Activated CD4-positive, alpha-beta T cell treated with anti-CD3 and anti-CD28 coated beads for 36 hours (primary cell): ENCODE measurements at regions of chr1 and their contacts with region 1.

Region 1: DNA sequence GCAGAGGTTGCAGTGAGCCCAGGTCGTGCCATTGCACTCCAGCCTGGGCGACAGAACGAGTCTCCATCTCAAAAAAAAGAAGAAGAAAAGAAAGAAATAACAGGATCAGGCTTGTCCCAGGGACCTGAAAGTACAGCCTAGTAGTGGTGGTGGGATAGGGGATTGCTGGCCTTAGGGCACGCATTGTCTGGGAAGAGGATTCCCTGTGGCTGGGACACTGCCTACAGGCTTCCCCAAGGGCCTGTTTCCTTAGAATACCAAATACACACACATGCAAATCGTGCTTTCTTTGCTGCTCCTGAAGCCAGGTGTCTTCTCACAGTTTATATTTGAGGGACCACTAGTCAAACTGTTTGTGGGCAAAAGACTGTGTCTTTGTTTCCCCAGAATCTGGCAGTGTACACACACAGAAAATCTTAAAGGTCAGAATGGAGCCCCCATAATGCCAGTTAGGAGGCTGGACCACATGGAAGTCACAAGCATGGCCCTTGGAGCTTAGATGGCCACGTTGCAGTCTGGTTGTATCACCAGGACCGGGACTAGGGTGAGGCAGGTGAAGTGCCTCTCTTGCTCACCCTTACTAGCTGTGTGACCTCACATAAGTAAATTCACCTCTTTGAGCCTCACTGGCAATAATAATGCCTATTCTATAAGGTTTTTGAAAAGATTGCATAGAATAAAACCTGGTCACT is 12.7 kb upstream of the ASAP3 start:
- DNase-seq: no peak
- ATAC-seq: peak; percentile 12
- H3K4me3 Mint-ChIP-seq: no peak overlapping the region
- H3K27ac Mint-ChIP-seq: no peak overlapping the region
- H3K4me1 Mint-ChIP-seq: no peaks in the 10 kb centered on the region
- H3K27me3 Mint-ChIP-seq: no peaks in the 10 kb centered on the region

Region 2: GRCh38 chr1:23484253-23485001 is 12.2 kb before region 1 on chr1:
- CTCF ChIA-PET with region 1: interaction called, 48 read pairs
- POLR2A ChIA-PET with region 1: interaction called, 3 read pairs
- intact Hi-C with region 1: no loop called
- DNase-seq: peak; percentile 95
- ATAC-seq: peak; percentile 94
- H3K4me3 Mint-ChIP-seq: peak overlapping the region; percentile 79
- H3K27ac Mint-ChIP-seq: peak overlapping the region; percentile 33
- H3K4me1 Mint-ChIP-seq: peaks cover 20% of the 10 kb centered on the region
- H3K27me3 Mint-ChIP-seq: peaks cover 18% of the 10 kb centered on the region

Region 3: GRCh38 chr1:23514111-23514679 is 17.6 kb after region 1 on chr1:
- CTCF ChIA-PET with region 1: interaction called, 32 read pairs
- POLR2A ChIA-PET with region 1: interaction called, 4 read pairs
- intact Hi-C with region 1: no loop called
- DNase-seq: no peak
- ATAC-seq: no peak
- H3K4me3 Mint-ChIP-seq: no peak overlapping the region
- H3K27ac Mint-ChIP-seq: no peak overlapping the region
- H3K4me1 Mint-ChIP-seq: no peaks in the 10 kb centered on the region
- H3K27me3 Mint-ChIP-seq: no peaks in the 10 kb centered on the region

Region 4: DNA sequence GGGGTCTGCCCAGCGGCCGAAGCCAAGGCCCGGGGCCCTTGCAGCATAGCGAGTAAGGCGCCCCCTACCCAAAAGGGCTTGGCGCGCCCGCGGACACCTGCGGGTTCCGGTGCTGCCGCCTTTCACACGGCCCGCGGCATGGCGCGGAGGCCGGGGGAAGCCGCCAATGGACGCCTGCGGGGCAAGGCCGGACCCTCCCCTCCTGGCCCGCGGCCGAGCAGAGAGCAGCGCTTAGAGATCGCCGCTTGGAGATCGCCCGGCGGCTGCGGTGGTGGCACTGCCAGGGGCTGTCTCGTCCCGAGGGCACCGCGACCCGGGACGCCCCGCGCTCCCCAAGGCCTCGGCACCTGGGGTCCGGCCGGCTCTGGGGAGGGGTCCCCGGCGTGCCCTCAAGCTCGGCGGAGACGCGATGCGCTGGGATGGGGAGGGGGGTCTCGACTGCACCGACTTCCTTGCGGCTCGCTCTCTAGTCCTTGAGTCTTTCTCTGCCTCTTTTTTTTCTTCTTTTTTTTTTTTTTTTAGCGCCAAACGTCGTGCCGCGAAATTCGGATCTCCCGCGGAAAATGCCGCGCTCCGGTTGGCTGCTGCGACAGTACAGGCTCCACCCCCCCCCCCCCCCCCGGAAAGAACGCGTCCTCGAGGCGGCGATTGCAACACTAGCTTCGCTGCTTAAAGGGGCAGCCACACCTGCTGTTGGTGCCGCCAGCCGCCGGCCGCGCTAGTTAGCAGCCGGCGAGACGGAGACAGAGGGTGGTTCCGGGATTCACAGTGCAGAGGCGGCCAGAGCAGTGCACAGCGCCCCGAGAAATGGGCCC is 34.3 kb after region 1 on chr1 and contains the start of gene E2F2:
- CTCF ChIA-PET with region 1: interaction called, 67 read pairs
- POLR2A ChIA-PET with region 1: interaction called, 4 read pairs
- intact Hi-C with region 1: no loop called
- DNase-seq: peak; percentile 91
- ATAC-seq: peak; percentile 81
- H3K4me3 Mint-ChIP-seq: peak within 1 kb of the TSS; percentile 84
- H3K27ac Mint-ChIP-seq: peak within 1 kb of the TSS; percentile 95
- H3K4me1 Mint-ChIP-seq: peaks cover 68% of the 10 kb centered on the region
- H3K27me3 Mint-ChIP-seq: no peaks in the 10 kb centered on the region
- total RNA-seq, gene E2F2: 25.0 to 32.0 TPM

Region 5: DNA sequence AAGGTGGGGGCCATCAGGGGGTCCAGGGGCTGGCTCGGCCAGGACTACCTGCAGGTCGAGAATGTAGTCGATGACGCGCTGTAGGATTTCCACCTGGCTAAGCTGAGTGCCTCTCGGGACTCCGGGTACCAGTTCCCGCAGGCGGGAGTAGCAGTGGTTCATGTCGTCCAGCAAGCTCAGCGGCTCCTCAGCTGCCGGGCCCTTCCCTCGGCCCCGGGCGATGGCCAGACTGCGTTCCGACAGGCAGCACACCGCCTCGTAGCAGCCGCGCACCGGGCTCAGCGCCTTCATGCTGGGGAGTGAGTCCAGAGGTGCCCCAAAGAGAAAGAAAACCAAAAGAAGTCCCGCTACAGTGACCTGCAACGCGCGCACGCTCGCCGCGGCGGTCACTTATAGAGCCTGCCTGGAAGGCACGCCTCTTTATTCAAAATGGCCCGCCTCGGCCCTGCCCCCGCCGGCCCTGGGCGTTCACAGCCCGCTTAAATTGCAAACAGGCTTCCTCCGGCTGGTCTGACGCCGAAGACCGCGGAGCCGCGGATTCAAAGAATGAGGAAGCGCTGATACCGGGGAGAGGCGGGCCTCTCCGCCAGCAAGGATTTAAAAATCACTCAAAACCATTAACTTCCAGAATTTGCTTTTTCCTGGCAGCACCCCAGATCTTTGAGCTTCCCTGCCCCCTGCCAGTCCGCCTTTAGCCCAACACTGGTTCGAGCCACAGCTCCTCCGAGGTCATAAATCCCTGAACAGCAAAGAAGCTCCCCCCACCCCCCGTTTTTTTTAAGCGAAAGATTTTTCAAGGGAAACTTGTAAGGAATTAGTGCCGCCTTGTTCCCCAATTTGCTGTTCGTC is 62.7 kb after region 1 on chr1 and contains the start of gene ID3:
- CTCF ChIA-PET with region 1: interaction called, 11 read pairs
- POLR2A ChIA-PET with region 1: no interaction called
- intact Hi-C with region 1: no loop called
- DNase-seq: peak; percentile 96
- ATAC-seq: peak; percentile 71
- H3K4me3 Mint-ChIP-seq: peak within 1 kb of the TSS; percentile 94
- H3K27ac Mint-ChIP-seq: peak within 1 kb of the TSS; percentile 79
- H3K4me1 Mint-ChIP-seq: peaks cover 58% of the 10 kb centered on the region
- H3K27me3 Mint-ChIP-seq: peaks cover 5% of the 10 kb centered on the region
- total RNA-seq, gene ID3: 42.6 to 43.9 TPM

Region 6: DNA sequence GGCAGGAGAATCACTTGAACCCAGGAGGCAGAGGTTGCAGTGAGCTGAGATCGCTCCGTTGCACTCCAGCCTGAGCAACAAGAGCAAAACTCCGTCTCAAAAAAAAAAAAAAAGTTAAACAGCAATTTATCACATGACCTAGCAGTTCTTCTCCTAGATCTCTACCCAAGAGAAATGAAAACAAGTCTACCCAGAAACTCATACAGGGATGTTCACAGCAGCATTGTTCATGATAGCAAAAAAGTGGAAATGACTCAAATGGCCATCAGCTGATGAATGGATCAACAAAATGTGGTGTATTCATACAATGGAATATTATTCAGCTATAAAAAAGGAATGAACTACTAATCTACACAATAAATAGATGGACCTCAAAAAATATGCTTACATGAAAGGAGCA is 74.8 kb after region 1 on chr1:
- CTCF ChIA-PET with region 1: no interaction called
- POLR2A ChIA-PET with region 1: no interaction called
- intact Hi-C with region 1: no loop called
- DNase-seq: no peak
- ATAC-seq: no peak
- H3K4me3 Mint-ChIP-seq: no peak overlapping the region
- H3K27ac Mint-ChIP-seq: no peak overlapping the region
- H3K4me1 Mint-ChIP-seq: peaks cover 26% of the 10 kb centered on the region
- H3K27me3 Mint-ChIP-seq: peaks cover 11% of the 10 kb centered on the region

Region 7: GRCh38 chr1:23664837-23665795 is 168.5 kb after region 1 on chr1:
- CTCF ChIA-PET with region 1: interaction called, 5 read pairs
- POLR2A ChIA-PET with region 1: no interaction called
- intact Hi-C with region 1: loop called in 1 of 2 experiments (anchors 2 kb)
- DNase-seq: peak; percentile 47
- ATAC-seq: peak; percentile 49
- H3K4me3 Mint-ChIP-seq: no peak overlapping the region
- H3K27ac Mint-ChIP-seq: no peak overlapping the region
- H3K4me1 Mint-ChIP-seq: peaks cover 6% of the 10 kb centered on the region
- H3K27me3 Mint-ChIP-seq: no peaks in the 10 kb centered on the region